ENCODE measurements at regions of chr14 and their contacts with region 1.

Region 1: DNA sequence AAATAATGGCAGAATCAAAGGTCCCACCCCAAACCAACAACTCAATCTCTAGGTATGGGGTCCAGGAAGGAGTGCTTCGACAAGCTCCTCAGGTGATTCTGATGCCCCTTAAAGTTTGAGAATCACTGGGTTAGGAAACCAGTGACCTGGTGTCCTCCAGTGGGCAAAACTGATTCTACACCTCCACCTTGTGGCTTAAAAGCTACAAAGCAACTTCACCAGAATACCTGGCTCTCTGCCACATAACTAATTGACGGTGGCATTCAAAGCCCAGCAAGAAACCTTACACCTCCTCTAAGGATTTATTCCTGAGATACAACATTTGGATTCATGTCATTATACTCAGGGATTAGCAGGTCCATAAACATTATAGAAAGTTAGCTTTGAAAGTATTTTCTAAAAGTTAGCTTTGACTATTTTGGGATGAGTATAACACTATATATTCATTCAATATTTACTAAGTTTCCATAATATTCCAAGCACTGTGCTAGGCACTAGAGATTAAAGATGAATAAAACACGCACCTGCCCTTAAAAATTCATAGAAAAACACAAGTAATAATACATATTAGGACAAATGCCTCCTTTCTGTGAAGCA is 45.4 kb downstream of the DCAF5 start:
- DNase-seq: no peak
- ATAC-seq: peak; percentile 63

Region 2: GRCh38 chr14:68718023-68718995 is 389.2 kb before region 1 on chr14:
- intact Hi-C with region 1: no loop called
- DNase-seq: no peak
- ATAC-seq: no peak

Region 3: GRCh38 chr14:68911594-68912227 is 195.8 kb before region 1 on chr14:
- intact Hi-C with region 1: loop called (anchors 10 kb)
- DNase-seq: peak; percentile 85
- ATAC-seq: peak; percentile 92

Region 4: DNA sequence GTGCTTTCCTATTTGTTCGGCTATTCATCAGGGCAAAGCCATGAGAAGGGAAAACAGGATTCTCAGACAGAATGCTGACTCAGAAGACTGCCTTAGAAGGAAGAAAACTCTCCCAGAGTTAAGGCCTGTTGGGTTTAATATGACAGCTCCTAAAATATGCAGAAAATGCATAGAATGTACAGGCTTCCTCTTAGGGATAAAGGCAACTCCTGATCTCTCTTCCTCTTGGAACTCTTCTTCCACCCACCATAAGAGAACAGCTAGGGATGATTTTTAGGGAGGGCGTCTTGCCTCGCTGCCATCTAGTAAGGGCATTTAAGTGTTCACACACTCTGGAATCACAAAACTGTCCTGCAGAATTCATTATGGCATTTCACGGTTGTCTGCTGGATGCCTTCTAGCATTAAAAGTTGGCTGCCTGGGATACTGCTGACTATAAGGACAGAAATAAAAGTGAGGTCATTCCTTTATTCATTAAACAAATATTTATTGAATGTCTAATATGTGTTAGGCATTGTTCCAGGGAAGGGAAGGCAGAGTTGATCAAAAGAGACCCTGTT is 28.2 kb before region 1 on chr14:
- intact Hi-C with region 1: no loop called
- DNase-seq: no peak
- ATAC-seq: no peak

Measured in sciatic nerve (tissue), 2 donors.